Esophagus squamous epithelium (tissue), 5 donors: ENCODE measurements at regions of chr12 and their contacts with region 1.

Region 1: DNA sequence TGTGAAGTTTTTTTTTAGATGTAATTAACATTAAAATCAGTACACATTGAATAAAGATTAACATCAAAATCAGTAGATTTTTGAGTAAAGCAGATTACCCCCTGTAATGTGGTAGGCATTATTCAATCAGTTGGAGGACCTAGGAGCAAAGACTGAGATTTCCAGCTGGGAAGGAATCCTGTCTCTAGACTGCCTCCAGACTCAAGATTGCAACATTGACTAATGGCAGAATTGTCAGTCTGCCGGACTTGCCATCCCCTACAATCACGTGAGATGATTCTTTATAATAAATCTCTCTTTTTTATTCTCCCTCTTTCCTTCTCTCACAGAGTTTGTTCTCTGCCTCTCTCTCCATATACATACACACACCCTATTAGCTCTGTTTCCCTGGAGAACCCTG is 51.4 kb upstream of the SLC6A15 start:
- DNase-seq: no peak
- H3K4me3 ChIP-seq: no peak overlapping the region
- H3K27ac ChIP-seq: no peak overlapping the region
- H3K4me1 ChIP-seq: peaks cover 0 to 8% (median 0%) of the 10 kb centered on the region in 3 donors
- H3K27me3 ChIP-seq: no peaks in the 10 kb centered on the region
- CTCF ChIP-seq: no peak
- POLR2A ChIP-seq: no peak

Region 2: GRCh38 chr12:84874125-84874824 is 89.8 kb before region 1 on chr12:
- intact Hi-C with region 1: no loop called
- DNase-seq: no peak
- H3K4me3 ChIP-seq: no peak overlapping the region
- H3K27ac ChIP-seq: no peak overlapping the region
- H3K4me1 ChIP-seq: no peaks in the 10 kb centered on the region
- H3K27me3 ChIP-seq: no peaks in the 10 kb centered on the region
- CTCF ChIP-seq: peak; percentile 18 to 86 (median 72)
- POLR2A ChIP-seq: no peak

Region 3: DNA sequence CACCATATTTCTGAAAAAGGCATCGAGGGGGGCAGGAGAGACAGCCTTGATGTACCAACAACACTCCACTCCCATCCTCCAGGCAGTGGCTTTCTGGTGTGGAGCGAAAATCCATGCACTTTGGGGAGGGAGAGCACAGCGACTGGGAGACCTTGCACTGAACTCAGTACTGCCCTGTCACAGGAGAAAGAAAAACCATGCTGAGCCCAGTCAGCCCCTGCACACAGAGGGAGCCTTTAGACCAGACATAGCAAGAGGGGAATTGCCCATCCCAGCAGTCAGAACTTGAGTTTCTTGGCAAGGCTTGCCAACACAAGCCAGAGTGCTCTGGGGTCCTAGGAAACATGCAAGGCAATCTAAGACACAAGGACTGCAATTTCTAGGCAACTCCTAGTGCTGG is 26.6 kb before region 1 on chr12:
- intact Hi-C with region 1: loop called (anchors 2 kb)
- DNase-seq: no peak
- H3K4me3 ChIP-seq: no peak overlapping the region
- H3K27ac ChIP-seq: no peak overlapping the region
- H3K4me1 ChIP-seq: no peaks in the 10 kb centered on the region
- H3K27me3 ChIP-seq: no peaks in the 10 kb centered on the region
- CTCF ChIP-seq: no peak
- POLR2A ChIP-seq: no peak

Region 4: DNA sequence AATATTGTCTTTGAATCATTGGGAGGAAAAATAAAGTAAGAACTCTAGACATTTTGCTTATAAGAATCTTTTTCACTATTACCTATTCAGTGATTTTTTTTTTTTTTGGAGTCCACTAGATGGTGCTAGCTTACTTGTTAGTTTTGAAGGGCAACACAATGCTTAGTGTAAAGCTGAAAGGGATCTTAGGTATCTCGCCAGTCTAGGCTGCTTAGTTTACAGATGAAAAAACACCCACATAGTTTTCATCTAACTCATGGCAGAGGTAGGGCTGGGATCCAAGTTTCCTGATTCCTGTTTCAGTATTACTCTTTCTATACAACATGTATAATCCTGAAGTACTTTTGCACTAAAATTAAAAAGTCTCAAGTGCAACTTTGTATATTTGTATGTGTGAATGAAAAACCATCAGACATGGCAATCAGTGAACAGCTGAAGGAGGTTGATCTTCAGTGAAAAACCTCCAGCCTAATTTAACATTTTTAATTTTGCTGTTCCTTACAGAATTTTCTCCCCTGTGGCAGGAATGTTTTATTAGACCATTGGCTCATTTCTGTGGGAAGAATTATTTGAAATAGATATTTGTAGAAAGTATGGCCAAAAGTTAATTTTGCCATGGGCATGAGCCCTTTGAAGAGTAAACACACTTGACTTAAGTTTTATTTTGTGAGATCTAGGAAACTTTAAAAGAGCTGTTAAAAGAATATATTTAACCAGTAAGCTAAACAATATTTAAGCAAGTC is 112.8 kb after region 1 on chr12:
- intact Hi-C with region 1: no loop called
- DNase-seq: no peak
- H3K4me3 ChIP-seq: no peak overlapping the region
- H3K27ac ChIP-seq: no peak overlapping the region
- H3K4me1 ChIP-seq: no peaks in the 10 kb centered on the region
- H3K27me3 ChIP-seq: no peaks in the 10 kb centered on the region
- CTCF ChIP-seq: peak in 3 of 6 experiments; percentile 10 to 45 (median 31)
- POLR2A ChIP-seq: no peak